Ascending aorta (tissue), 2 donors: ENCODE measurements at regions of chr10 and their contacts with region 1.

Region 1: GRCh38 chr10:126247446-126247975 is 140.8 kb downstream of the ADAM12 start:
- DNase-seq: peak; percentile 74 to 97
- H3K4me3 ChIP-seq: peak overlapping the region in 1 of 2 donors; percentile 16
- H3K27ac ChIP-seq: peak overlapping the region; percentile 69 to 79
- H3K4me1 ChIP-seq: peaks cover 0 to 12% of the 10 kb centered on the region in 2 donors
- H3K27me3 ChIP-seq: no peaks in the 10 kb centered on the region
- CTCF ChIP-seq: no peak

Region 2: GRCh38 chr10:126062131-126062981 is 185.2 kb before region 1 on chr10:
- intact Hi-C with region 1: loop called (anchors 5 kb)
- DNase-seq: peak; percentile 74 to 96
- H3K4me3 ChIP-seq: no peak overlapping the region
- H3K27ac ChIP-seq: peak overlapping the region; percentile 85 to 86
- H3K4me1 ChIP-seq: peaks cover 15 to 35% of the 10 kb centered on the region in 2 donors
- H3K27me3 ChIP-seq: no peaks in the 10 kb centered on the region
- CTCF ChIP-seq: no peak

Region 3: DNA sequence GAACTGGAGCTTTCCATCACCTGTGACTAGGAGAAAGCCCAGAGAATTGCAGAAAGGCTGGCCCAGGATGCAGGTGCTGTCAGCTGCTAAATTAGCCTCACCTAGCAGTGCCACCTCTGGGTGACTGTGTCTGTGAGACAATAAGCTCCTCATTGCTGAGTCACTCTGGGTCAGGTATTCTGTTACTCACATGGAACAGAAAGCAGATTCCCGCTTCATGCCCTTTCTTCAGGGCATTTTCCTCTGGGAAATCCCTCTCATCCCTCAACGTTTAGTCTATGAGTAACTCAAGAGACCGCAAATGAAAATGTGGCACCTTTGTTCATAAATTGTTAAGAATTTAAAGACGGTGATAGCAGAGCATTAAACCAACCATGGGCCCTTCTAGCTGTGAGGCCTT is 43.2 kb before region 1 on chr10:
- intact Hi-C with region 1: loop called (anchors 5 kb)
- DNase-seq: no peak
- H3K4me3 ChIP-seq: no peak overlapping the region
- H3K27ac ChIP-seq: peak overlapping the region in 1 of 2 donors; percentile 3
- H3K4me1 ChIP-seq: peaks cover 0 to 6% of the 10 kb centered on the region in 2 donors
- H3K27me3 ChIP-seq: no peaks in the 10 kb centered on the region
- CTCF ChIP-seq: no peak